ENCODE measurements at regions of chr7 and their contacts with region 1.

Region 1: GRCh38 chr7:5629941-5630340 is 151.5 kb downstream of the RNF216 start:
- DNase-seq: no peak
- ATAC-seq: peak; percentile 65 to 68; a peak in 5 of 6 replicates
- H3K4me3 ChIP-seq: no peak overlapping the region
- H3K27ac ChIP-seq: no peak overlapping the region
- H3K4me1 ChIP-seq: peaks cover 15% of the 10 kb centered on the region; the same call in 2 of the 3 replicates
- CTCF ChIP-seq: no peak
- EP300 ChIP-seq: no peak
- POLR2A ChIP-seq: no peak
- RAD21 ChIP-seq: no peak

Region 2: GRCh38 chr7:5603241-5604140 is 26.4 kb before region 1 on chr7:
- CTCF ChIA-PET with region 1: no interaction called
- POLR2A ChIA-PET with region 1: no interaction called
- DNase-seq: no peak
- ATAC-seq: no peak
- H3K4me3 ChIP-seq: no peak overlapping the region
- H3K27ac ChIP-seq: no peak overlapping the region
- H3K4me1 ChIP-seq: peaks cover 12% of the 10 kb centered on the region
- CTCF ChIP-seq: no peak
- EP300 ChIP-seq: no peak
- POLR2A ChIP-seq: no peak
- RAD21 ChIP-seq: no peak

Region 3: DNA sequence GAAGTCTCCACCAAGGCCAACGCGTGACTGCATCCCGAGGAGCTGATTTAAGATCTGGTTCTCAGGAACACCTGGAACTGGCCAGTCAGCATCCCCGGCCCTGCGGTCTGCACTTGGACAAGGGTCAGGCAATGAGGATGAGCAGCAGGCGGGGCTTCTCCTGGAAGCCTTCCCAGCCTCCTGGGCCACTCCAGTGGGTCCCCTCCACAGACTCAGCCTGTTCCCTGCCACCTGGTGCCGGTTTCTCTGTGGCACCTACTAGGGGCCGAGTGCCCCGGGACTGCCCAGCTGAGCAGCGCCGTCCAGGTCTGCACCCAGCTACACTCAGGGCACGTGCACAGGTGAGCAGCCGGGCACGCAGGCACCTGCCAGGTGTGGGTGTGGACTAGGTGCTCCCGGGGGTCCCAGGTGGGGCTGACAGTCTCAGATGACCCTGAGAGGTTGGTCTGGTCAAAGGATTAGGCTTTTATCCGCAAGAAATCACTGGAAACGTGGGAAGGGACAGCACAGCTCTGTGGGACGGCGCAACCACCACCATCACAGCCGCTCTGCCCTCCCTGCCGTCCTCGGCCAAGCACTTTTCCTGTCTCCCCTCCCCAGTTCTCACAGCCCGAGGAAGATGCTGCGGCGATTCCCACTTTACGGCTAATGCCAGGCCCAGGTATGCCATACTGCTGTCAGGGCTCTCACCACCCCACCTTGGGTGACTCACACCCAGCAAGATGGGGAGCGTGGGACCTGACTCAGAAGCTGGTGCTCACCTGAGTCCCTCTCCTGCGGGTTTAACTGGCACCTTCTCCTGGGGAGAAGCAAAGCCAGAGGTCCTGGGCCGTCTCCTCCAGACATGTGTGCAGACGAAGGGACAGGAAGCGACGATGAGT is 14.5 kb before region 1 on chr7:
- CTCF ChIA-PET with region 1: interaction called, 12 read pairs
- POLR2A ChIA-PET with region 1: no interaction called
- DNase-seq: no peak
- ATAC-seq: peak; percentile 9 to 10; a peak in 3 of 6 replicates
- H3K4me3 ChIP-seq: no peak overlapping the region
- H3K27ac ChIP-seq: no peak overlapping the region
- H3K4me1 ChIP-seq: no peaks in the 10 kb centered on the region
- CTCF ChIP-seq: no peak
- EP300 ChIP-seq: no peak
- POLR2A ChIP-seq: no peak
- RAD21 ChIP-seq: no peak